Ascending aorta (tissue), 2 donors: ENCODE measurements at regions of chr9 and their contacts with region 1.

Region 1: DNA sequence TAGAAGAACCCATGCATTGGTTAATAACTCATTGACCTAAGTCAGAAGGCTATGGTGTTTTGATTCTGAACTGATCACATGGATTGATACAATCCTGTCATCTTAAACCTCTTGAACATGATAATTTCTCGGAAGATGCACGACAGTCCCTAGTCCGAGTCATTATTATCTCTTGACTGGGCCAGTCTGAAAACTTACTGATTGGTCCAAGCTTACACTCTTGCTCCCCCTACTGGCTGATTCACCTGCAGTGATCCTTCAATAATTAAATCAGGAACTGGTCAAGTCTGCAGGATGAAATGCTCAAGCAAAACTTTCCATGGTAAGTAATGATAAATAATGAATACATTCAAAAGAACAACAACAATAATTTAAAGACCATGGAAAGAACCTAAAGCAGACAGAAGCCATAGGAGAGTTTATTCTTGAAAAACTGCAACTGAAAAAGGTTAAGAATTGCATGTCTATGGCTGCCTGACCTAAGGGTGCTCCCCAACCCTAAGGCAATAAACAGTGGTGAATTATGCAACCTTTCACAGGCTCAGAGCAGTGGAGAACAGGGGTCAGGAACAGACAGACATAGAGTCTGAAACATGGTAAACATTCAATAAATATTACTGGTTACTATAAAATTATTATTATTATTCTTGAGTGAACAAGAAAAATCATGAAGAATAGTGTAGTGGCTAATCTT is 79.3 kb downstream of the BRINP1 start:
- DNase-seq: peak in 1 of 2 donors; percentile 66
- H3K4me3 ChIP-seq: no peak overlapping the region
- H3K27ac ChIP-seq: no peak overlapping the region
- H3K4me1 ChIP-seq: no peaks in the 10 kb centered on the region
- H3K27me3 ChIP-seq: no peaks in the 10 kb centered on the region
- CTCF ChIP-seq: peak; percentile 49 to 88 (median 79)

Region 2: DNA sequence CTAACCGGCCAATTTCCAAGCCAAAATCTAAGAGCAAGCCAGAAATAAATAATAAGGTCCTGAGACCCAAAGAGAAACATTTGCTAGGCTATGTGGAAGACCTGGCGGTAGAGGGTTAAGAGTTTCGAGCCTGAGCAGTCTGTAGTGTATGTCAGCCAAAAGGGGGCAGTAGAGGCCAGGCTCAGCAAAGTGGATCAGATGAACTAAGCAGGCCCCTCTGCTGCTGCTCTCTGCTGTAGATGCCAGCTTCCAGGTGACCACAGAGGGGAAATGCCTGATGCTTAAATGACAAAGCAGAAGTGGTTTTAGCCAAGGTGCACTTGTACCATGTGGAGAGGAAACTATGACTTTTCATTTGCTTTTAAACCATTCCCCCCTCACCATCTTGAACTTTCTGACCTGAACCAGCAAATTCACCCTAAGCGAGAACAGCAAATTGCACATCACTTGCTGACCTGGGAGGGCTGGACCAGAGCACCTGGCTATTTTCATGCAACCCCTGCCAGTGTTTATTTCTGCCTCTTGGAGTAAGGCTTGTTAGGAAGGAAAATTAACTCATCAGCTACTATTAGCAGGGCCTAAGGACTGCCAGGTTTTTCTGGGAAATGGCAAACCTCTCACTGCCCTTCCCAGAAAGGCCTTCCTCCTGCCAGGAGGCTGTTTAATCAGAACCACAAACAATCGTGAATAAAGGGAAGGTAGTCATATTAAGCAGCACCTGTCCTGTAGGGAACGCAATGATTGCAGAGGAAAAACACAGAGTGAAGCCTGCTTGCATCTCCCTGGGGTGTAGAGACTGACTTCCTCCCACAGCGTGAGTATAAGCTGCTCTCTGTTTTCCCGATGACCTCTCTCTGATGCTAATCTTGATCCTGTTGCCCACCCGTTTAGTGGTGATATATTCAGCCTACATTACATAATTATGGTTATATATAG is 767.5 kb before region 1 on chr9:
- intact Hi-C with region 1: loop called (anchors 10 kb)
- DNase-seq: peak in 1 of 2 donors; percentile 69
- H3K4me3 ChIP-seq: no peak overlapping the region
- H3K27ac ChIP-seq: no peak overlapping the region
- H3K4me1 ChIP-seq: no peaks in the 10 kb centered on the region
- H3K27me3 ChIP-seq: no peaks in the 10 kb centered on the region
- CTCF ChIP-seq: peak; percentile 18 to 72 (median 51)

Region 3: GRCh38 chr9:118595719-118596305 is 694.1 kb before region 1 on chr9:
- intact Hi-C with region 1: loop called (anchors 10 kb)
- DNase-seq: no peak
- H3K4me3 ChIP-seq: no peak overlapping the region
- H3K27ac ChIP-seq: no peak overlapping the region
- H3K4me1 ChIP-seq: no peaks in the 10 kb centered on the region
- H3K27me3 ChIP-seq: no peaks in the 10 kb centered on the region
- CTCF ChIP-seq: peak in 2 of 3 experiments; percentile 19 to 32

Region 4: DNA sequence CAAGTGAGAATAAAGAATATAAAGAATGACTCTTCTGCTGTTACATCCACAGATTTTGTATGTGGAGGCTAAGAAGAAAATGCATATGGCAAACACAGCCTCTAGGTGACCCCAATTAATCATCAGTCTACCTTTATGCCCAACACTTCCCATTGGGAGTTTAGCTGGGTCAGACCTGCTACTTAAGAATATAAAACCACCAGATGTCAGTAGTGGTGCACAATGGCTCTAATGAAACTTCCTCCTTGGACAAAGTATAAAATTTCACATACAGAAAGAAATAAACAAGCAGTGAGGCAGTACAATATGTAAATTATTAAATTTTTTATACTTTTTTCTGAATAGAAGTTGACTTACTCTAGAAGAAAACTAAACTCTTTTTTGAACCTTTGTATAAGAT is 460.6 kb before region 1 on chr9:
- intact Hi-C with region 1: loop called (anchors 2 kb)
- DNase-seq: no peak
- H3K4me3 ChIP-seq: no peak overlapping the region
- H3K27ac ChIP-seq: no peak overlapping the region
- H3K4me1 ChIP-seq: no peaks in the 10 kb centered on the region
- H3K27me3 ChIP-seq: no peaks in the 10 kb centered on the region
- CTCF ChIP-seq: peak in 2 of 3 experiments; percentile 36 to 66

Region 5: DNA sequence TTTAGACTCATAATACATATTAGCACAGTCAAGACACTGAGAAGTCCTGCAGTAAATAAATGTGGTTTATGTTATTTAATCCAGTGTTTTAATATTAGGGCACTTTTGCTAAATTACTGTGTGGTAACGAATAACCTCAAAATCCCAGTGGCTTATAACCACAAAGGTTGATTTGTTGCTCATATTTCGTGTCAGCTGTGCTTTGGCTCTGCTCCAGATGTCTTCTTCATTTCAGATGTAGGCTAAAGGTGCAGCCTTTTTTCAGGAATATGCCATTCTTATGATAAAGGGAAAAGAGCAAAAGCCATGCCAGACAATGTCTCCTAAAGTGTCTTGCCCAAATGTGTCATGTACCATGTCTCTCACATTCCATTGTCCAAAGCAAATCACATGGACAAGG is 65.5 kb before region 1 on chr9:
- intact Hi-C with region 1: no loop called
- DNase-seq: no peak
- H3K4me3 ChIP-seq: no peak overlapping the region
- H3K27ac ChIP-seq: no peak overlapping the region
- H3K4me1 ChIP-seq: no peaks in the 10 kb centered on the region
- H3K27me3 ChIP-seq: no peaks in the 10 kb centered on the region
- CTCF ChIP-seq: no peak